Adrenal gland (tissue), 19 donors: ENCODE measurements at regions of chr3 and their contacts with region 1.

Region 1: DNA sequence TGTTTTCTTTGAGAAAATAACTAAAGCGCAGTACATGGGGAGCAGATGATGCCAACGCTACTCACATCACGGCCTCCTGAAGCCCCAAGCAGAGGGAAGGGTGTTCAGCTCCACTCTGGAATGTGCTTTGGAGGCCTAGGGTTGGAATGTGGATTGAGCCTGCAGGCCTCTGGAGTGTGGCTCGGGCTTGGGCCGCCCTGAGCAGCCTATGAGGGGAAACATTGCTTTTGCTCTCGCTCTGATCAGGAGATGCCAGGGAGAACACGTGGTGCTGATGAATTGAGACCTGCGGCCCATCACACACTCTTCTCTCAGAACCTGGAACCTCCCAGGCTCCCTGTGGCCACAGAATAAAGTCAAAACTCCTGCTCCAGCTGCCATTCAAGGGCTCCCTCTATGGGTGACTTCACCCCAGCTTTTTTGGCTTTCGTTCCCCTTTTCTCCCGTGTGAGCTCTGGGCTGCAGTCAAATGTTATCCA is 23.3 kb downstream of the CCDC13 start:
- DNase-seq: peak in 2 of 7 donors; percentile 25 to 59
- H3K4me3 ChIP-seq: no peak overlapping the region
- H3K27ac ChIP-seq: no peak overlapping the region
- H3K4me1 ChIP-seq: no peaks in the 10 kb centered on the region
- H3K27me3 ChIP-seq: no peaks in the 10 kb centered on the region
- CTCF ChIP-seq: peak in 3 of 6 experiments; percentile 12 to 33 (median 31)
- POLR2A ChIP-seq: no peak

Region 2: DNA sequence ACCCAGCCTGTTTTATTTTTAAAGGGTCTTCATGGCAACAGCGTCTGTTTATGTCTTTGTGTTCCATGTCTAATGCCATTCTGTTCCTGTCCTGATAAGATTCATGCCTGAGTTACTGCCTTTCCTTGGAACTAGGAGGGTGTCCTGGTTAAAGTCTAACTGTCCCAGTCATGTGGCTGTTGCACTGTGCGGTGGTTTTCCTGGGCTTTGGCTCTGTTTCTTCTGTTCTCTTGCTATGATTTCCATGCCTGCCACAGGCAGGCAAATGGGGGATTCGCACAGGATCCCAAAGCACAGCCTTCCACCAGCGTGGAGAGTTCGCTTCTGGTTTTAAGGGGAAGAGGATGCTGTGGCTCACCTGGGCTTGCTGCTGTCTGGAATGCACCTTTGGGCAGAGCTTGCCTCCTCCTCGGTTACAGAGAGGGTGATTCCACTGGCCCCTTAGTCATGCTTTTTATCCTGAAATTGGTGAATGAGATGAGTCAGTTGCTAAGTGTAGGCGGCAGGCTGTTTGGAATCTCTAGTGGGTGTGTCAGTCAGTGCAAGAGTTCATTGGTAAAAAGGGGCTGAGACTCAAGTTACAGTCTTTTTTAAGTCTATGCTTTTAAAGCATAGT is 570.6 kb before region 1 on chr3:
- intact Hi-C with region 1: no loop called
- DNase-seq: peak in 6 of 7 donors; percentile 58 to 77 (median 66)
- H3K4me3 ChIP-seq: no peak overlapping the region
- H3K27ac ChIP-seq: peak overlapping the region in 3 of 5 donors; percentile 13 to 58 (median 39)
- H3K4me1 ChIP-seq: peaks cover 0 to 15% of the 10 kb centered on the region in 2 donors
- H3K27me3 ChIP-seq: no peaks in the 10 kb centered on the region
- CTCF ChIP-seq: no peak
- POLR2A ChIP-seq: no peak

Region 3: GRCh38 chr3:42535981-42536790 is 213.6 kb before region 1 on chr3:
- intact Hi-C with region 1: no loop called
- DNase-seq: peak in 1 of 7 donors; percentile 25
- H3K4me3 ChIP-seq: no peak overlapping the region
- H3K27ac ChIP-seq: no peak overlapping the region
- H3K4me1 ChIP-seq: no peaks in the 10 kb centered on the region
- H3K27me3 ChIP-seq: no peaks in the 10 kb centered on the region
- CTCF ChIP-seq: peak in 2 of 6 experiments; percentile 30 to 32
- POLR2A ChIP-seq: no peak

Region 4: GRCh38 chr3:42581709-42582473 is 167.9 kb before region 1 on chr3 and contains the start of gene SEC22C:
- intact Hi-C with region 1: loop called in 1 of 2 experiments (anchors 10 kb)
- DNase-seq: peak; percentile 96 to 98 (median 97)
- H3K4me3 ChIP-seq: peak within 1 kb of the TSS; percentile 23 to 89 (median 67)
- H3K27ac ChIP-seq: peak within 1 kb of the TSS; percentile 4 to 93 (median 75)
- H3K4me1 ChIP-seq: peaks cover 0 to 17% of the 10 kb centered on the region in 2 donors
- H3K27me3 ChIP-seq: no peaks in the 10 kb centered on the region
- CTCF ChIP-seq: peak in 3 of 6 experiments; percentile 10 to 27 (median 17)
- POLR2A ChIP-seq: peak; percentile 55 to 87
- total RNA-seq, gene SEC22C: 37.0 to 65.7 (median 42.4) TPM

Region 5: DNA sequence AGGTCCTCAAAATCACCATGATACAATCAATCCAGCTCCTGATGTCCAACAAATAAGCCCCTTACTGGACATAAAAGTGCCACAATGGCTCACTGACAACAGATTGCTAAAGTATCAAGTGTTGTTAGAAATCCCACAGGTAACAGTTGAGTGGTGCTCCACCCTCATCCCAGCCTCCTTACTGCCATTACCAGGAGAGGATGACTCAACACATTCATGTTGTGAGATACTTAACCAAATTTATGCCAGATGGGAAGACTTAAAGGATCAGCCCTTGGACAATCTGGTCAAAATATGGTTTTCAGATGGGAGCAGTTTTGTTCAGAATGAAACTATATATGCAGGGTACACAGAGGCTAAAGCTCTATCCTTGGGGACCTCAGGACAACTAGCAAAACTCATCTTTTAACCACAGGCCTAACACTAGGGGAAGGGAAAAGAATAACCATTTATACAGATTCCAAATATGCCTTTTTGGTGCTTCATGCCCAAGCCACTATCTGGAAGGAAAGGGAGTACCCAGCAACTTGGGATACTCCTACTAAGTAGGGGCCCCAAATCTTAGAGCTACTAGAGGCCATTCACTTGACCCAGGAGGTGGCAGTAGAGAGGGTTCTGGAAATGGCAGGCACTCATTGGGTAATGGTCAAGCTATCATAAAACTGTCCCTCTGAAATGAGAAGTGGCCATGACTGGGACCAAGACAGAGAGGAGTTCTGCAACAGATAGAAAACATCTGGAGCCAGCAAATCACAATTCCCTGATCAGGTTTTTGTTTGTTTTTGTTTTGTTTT is 149.3 kb after region 1 on chr3:
- intact Hi-C with region 1: no loop called
- DNase-seq: no peak
- H3K4me3 ChIP-seq: no peak overlapping the region
- H3K27ac ChIP-seq: no peak overlapping the region
- H3K4me1 ChIP-seq: no peaks in the 10 kb centered on the region
- H3K27me3 ChIP-seq: no peaks in the 10 kb centered on the region
- CTCF ChIP-seq: no peak
- POLR2A ChIP-seq: no peak

Region 6: DNA sequence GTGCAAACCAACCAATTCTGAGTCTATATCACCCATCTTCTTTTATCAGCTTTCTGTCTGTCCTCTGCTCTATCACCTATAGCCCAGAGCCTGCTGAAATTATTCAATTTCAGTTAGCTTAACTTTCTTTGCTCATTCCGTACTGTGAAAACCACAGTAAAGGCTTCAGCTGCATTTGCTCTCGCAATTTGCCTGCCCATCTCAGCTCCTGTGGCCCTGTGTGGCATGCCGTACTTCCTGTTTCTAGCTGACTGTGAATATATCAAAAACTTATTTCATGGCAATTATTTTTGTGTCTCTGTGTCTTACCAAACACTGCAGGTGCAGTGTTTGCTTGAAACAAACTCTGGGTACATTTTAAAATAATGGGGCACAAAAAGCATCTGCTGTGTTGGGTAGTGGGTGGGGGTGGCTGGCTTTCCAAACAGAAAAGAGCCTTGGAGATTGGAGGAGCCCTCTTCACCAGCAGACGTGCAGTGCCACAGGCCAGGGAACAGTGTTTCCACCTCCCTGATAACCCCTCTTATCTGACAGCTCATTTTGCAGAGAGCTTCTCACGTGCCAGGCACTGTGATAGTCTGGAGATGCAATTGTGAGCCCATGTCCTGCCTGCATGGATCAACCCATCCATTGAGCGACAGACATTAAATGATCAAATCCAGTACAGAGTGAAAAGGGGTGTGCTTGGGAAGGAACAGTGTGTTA is 274.5 kb after region 1 on chr3:
- intact Hi-C with region 1: no loop called
- DNase-seq: peak in 1 of 7 donors; percentile 44
- H3K4me3 ChIP-seq: no peak overlapping the region
- H3K27ac ChIP-seq: no peak overlapping the region
- H3K4me1 ChIP-seq: no peaks in the 10 kb centered on the region
- H3K27me3 ChIP-seq: no peaks in the 10 kb centered on the region
- CTCF ChIP-seq: no peak
- POLR2A ChIP-seq: no peak